ENCODE measurements at regions of chr2 and their contacts with region 1.

Region 1: GRCh38 chr2:146661473-146662096 is 1183.2 kb upstream of the ACVR2A start:
- DNase-seq: no peak
- H3K4me3 ChIP-seq: no peak overlapping the region
- H3K27ac ChIP-seq: no peak overlapping the region
- H3K4me1 ChIP-seq: no peaks in the 10 kb centered on the region
- H3K27me3 ChIP-seq: no peaks in the 10 kb centered on the region
- CTCF ChIP-seq: peak; percentile 66

Region 2: DNA sequence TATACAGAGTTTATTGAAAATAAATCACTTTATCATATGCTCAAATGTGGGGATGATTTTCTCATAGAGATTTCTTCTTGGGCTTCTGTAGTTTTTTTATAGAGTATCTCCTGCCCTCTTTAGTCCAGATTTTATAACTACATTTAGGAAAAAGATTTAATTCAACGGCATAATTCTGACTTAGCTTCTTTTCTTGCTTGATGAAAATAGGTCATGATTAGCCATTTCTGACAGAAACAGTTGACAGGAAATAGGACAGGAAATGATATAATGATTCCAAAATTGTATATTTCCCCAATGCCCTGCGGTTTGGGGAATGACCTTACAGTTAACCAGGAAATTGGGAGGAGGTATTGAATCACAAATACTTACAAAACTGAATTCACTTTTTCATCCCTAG is 348.7 kb before region 1 on chr2:
- CTCF ChIA-PET with region 1: no interaction called
- POLR2A ChIA-PET with region 1: no interaction called
- intact Hi-C with region 1: loop called (anchors 5 kb)
- DNase-seq: no peak
- H3K4me3 ChIP-seq: no peak overlapping the region
- H3K27ac ChIP-seq: no peak overlapping the region
- H3K4me1 ChIP-seq: no peaks in the 10 kb centered on the region
- H3K27me3 ChIP-seq: no peaks in the 10 kb centered on the region
- CTCF ChIP-seq: peak; percentile 26; the same call in 1 of the 2 replicates

Region 3: GRCh38 chr2:146523196-146523595 is 138.4 kb before region 1 on chr2:
- CTCF ChIA-PET with region 1: no interaction called
- POLR2A ChIA-PET with region 1: no interaction called
- intact Hi-C with region 1: loop called (anchors 5 kb)
- DNase-seq: no peak
- H3K4me3 ChIP-seq: no peak overlapping the region
- H3K27ac ChIP-seq: no peak overlapping the region
- H3K4me1 ChIP-seq: no peaks in the 10 kb centered on the region
- H3K27me3 ChIP-seq: no peaks in the 10 kb centered on the region
- CTCF ChIP-seq: peak; percentile 61

Region 4: GRCh38 chr2:146602383-146602782 is 59.2 kb before region 1 on chr2:
- CTCF ChIA-PET with region 1: no interaction called
- POLR2A ChIA-PET with region 1: no interaction called
- intact Hi-C with region 1: loop called (anchors 1 kb)
- DNase-seq: peak in 1 of 2 experiments; percentile 9
- H3K4me3 ChIP-seq: no peak overlapping the region
- H3K27ac ChIP-seq: no peak overlapping the region
- H3K4me1 ChIP-seq: no peaks in the 10 kb centered on the region
- H3K27me3 ChIP-seq: no peaks in the 10 kb centered on the region
- CTCF ChIP-seq: no peak

Measured in PC-9 (cell line).